MCF 10A (cell line): ENCODE measurements at regions of chr5 and their contacts with region 1.

Region 1: DNA sequence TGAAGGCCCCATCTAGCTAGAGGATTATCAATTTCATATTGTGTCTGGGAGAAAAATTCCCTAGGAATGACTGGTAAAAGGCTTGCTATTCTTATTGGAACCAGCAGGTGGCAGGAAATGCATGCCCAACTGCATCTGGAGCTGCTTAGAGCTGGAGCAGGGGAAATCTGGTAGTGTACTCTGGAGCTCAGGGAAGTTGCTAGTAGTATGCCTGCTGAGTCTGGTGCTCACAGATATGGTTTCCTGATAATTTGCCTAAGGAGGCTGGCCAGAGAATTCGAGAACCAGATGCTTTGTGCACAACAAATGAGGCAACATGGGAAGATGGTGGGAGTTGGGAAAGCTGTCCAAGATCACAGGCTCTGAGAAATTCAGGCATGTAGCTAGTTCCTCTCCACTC is 53.7 kb downstream of the G3BP1 start:
- DNase-seq: peak; percentile 81
- H3K4me3 Mint-ChIP-seq: no peak overlapping the region
- H3K27ac Mint-ChIP-seq: no peak overlapping the region
- H3K4me1 Mint-ChIP-seq: no peaks in the 10 kb centered on the region
- H3K27me3 Mint-ChIP-seq: no peaks in the 10 kb centered on the region
- CTCF ChIP-seq: peak; percentile 94

Region 2: DNA sequence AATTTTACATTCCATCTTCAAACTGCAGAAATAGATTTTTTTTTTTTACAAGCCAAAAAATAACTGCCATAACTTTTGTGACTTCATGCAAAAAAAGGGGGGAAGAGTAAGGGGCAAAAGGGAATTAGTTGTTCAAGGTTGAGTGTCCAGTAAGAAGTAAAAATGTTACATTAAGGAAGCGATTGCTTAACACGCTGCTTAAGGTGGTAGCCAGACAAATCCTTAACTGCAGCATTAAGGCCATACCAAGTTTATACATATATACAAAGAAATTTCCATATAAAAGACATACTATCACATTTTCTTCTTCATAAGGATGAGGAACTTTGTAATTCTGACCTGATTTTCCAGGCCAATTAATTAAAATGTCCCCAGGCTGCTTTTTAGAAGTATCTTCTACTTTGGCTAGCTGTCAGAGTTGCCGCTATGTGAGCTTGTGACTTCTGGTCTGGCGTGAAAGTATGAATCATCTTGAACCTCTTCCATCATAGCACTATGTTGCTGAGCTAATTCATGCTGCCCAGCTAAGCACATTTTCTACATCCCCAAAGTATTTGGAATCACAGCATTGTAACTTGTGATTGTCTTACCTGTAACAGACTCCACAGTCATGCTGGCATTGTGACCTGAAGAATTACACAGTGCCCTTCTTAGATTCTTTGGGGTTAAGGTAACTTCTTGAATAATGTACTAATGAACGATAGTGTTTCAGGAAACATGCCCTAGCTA is 13.7 kb before region 1 on chr5:
- CTCF ChIA-PET with region 1: interaction called, 28 read pairs
- POLR2A ChIA-PET with region 1: interaction called, 3 read pairs
- intact Hi-C with region 1: no loop called
- DNase-seq: peak; percentile 57
- H3K4me3 Mint-ChIP-seq: no peak overlapping the region
- H3K27ac Mint-ChIP-seq: peak overlapping the region; percentile 58
- H3K4me1 Mint-ChIP-seq: peaks cover 44% of the 10 kb centered on the region
- H3K27me3 Mint-ChIP-seq: no peaks in the 10 kb centered on the region
- CTCF ChIP-seq: no peak

Region 3: GRCh38 chr5:151873698-151874097 is 48.3 kb after region 1 on chr5:
- CTCF ChIA-PET with region 1: interaction called, 20 read pairs
- POLR2A ChIA-PET with region 1: no interaction called
- intact Hi-C with region 1: no loop called
- DNase-seq: no peak
- H3K4me3 Mint-ChIP-seq: no peak overlapping the region
- H3K27ac Mint-ChIP-seq: no peak overlapping the region
- H3K4me1 Mint-ChIP-seq: peaks cover 13% of the 10 kb centered on the region
- H3K27me3 Mint-ChIP-seq: no peaks in the 10 kb centered on the region
- CTCF ChIP-seq: no peak

Region 4: DNA sequence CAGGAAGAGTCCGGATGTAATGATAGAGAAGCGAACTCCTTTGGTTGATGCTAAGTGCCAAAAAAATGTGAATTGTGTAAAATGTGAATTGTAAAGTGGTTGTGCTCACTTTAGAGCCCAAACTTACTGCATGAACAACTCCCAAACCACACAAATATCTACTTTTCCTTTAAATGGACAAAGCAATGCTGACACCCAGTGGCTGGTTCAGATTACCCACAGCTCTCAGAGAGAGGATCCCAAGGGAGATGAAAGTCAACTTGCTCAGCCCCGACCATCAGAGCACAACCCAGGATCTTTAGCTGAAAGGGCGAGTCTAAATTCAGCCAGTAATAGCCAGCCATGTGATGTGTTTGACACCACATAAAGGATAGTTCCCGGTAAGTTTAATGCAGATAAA is 446.0 kb after region 1 on chr5:
- CTCF ChIA-PET with region 1: interaction called, 47 read pairs
- POLR2A ChIA-PET with region 1: interaction called, 3 read pairs
- intact Hi-C with region 1: loop called (anchors 1 kb)
- DNase-seq: peak; percentile 59
- H3K4me3 Mint-ChIP-seq: no peak overlapping the region
- H3K27ac Mint-ChIP-seq: no peak overlapping the region
- H3K4me1 Mint-ChIP-seq: peaks cover 6% of the 10 kb centered on the region
- H3K27me3 Mint-ChIP-seq: peaks cover 24% of the 10 kb centered on the region
- CTCF ChIP-seq: peak; percentile 50

Region 5: GRCh38 chr5:152514827-152515397 is 689.5 kb after region 1 on chr5:
- CTCF ChIA-PET with region 1: interaction called, 35 read pairs
- POLR2A ChIA-PET with region 1: no interaction called
- intact Hi-C with region 1: loop called (anchors 1 kb)
- DNase-seq: peak; percentile 56
- H3K4me3 Mint-ChIP-seq: no peak overlapping the region
- H3K27ac Mint-ChIP-seq: no peak overlapping the region
- H3K4me1 Mint-ChIP-seq: no peaks in the 10 kb centered on the region
- H3K27me3 Mint-ChIP-seq: no peaks in the 10 kb centered on the region
- CTCF ChIP-seq: peak; percentile 36